Heart right ventricle (tissue), 16 donors: ENCODE measurements at regions of chr11 and their contacts with region 1.

Region 1: GRCh38 chr11:12281571-12282478 is 95.5 kb upstream of the PARVA start:
- DNase-seq: peak; percentile 82 to 86
- ATAC-seq: peak; percentile 40 to 76 (median 66)
- H3K4me3 ChIP-seq: no peak overlapping the region
- H3K27ac ChIP-seq: no peak overlapping the region
- H3K4me1 ChIP-seq: peaks cover 0 to 26% (median 13%) of the 10 kb centered on the region in 9 donors
- H3K27me3 ChIP-seq: no peaks in the 10 kb centered on the region
- CTCF ChIP-seq: peak; percentile 93 to 99 (median 97)

Region 2: GRCh38 chr11:11806586-11806985 is 475.2 kb before region 1 on chr11:
- intact Hi-C with region 1: loop called in 2 of 10 experiments (anchors 2 to 10 kb)
- DNase-seq: no peak
- ATAC-seq: peak in 4 of 8 donors; percentile 45 to 65 (median 56)
- H3K4me3 ChIP-seq: no peak overlapping the region
- H3K27ac ChIP-seq: peak overlapping the region in 4 of 10 donors; percentile 34 to 62 (median 52)
- H3K4me1 ChIP-seq: peaks cover 0 to 20% (median 14%) of the 10 kb centered on the region in 9 donors
- H3K27me3 ChIP-seq: no peaks in the 10 kb centered on the region
- CTCF ChIP-seq: no peak

Region 3: GRCh38 chr11:11931461-11932055 is 350.3 kb before region 1 on chr11:
- intact Hi-C with region 1: loop called in 8 of 10 experiments (anchors 5 to 10 kb)
- DNase-seq: peak in 1 of 2 donors; percentile 27
- ATAC-seq: peak in 6 of 8 donors; percentile 55 to 73 (median 63)
- H3K4me3 ChIP-seq: no peak overlapping the region
- H3K27ac ChIP-seq: no peak overlapping the region
- H3K4me1 ChIP-seq: peaks cover 0 to 6% (median 0%) of the 10 kb centered on the region in 9 donors
- H3K27me3 ChIP-seq: no peaks in the 10 kb centered on the region
- CTCF ChIP-seq: peak; percentile 40 to 79 (median 73)

Region 4: GRCh38 chr11:12052676-12053605 is 228.9 kb before region 1 on chr11:
- intact Hi-C with region 1: loop called in 1 of 10 experiments (anchors 2 kb)
- DNase-seq: no peak
- ATAC-seq: no peak
- H3K4me3 ChIP-seq: no peak overlapping the region
- H3K27ac ChIP-seq: peak overlapping the region in 2 of 10 donors; percentile 27 to 60
- H3K4me1 ChIP-seq: peaks cover 0 to 32% (median 15%) of the 10 kb centered on the region in 9 donors
- H3K27me3 ChIP-seq: no peaks in the 10 kb centered on the region
- CTCF ChIP-seq: no peak

Region 5: GRCh38 chr11:12235947-12236743 is 45.7 kb before region 1 on chr11:
- intact Hi-C with region 1: loop called in 3 of 10 experiments (anchors 5 kb)
- DNase-seq: no peak
- ATAC-seq: peak; percentile 10 to 67 (median 50)
- H3K4me3 ChIP-seq: no peak overlapping the region
- H3K27ac ChIP-seq: peak overlapping the region in 8 of 10 donors; percentile 24 to 74 (median 50)
- H3K4me1 ChIP-seq: peaks cover 6 to 77% (median 44%) of the 10 kb centered on the region in 9 donors
- H3K27me3 ChIP-seq: no peaks in the 10 kb centered on the region
- CTCF ChIP-seq: peak; percentile 48 to 81 (median 75)